ENCODE measurements at regions of chr4 and their contacts with region 1.

Region 1: GRCh38 chr4:155809835-155810234 is 51.0 kb downstream of the GUCY1B1 start:
- DNase-seq: peak in 6 of 9 donors; percentile 24 to 66 (median 44)
- ATAC-seq: peak; percentile 86
- H3K4me3 ChIP-seq: no peak overlapping the region
- H3K4me3 Mint-ChIP-seq: no peak overlapping the region
- H3K27ac ChIP-seq: no peak overlapping the region
- H3K27ac Mint-ChIP-seq: no peak overlapping the region
- H3K4me1 ChIP-seq: no peaks in the 10 kb centered on the region
- H3K4me1 Mint-ChIP-seq: peaks cover 0 to 2% (median 0%) of the 10 kb centered on the region in 7 donors
- H3K27me3 ChIP-seq: no peaks in the 10 kb centered on the region
- H3K27me3 Mint-ChIP-seq: peaks cover 0 to 4% (median 0%) of the 10 kb centered on the region in 5 donors

Region 2: DNA sequence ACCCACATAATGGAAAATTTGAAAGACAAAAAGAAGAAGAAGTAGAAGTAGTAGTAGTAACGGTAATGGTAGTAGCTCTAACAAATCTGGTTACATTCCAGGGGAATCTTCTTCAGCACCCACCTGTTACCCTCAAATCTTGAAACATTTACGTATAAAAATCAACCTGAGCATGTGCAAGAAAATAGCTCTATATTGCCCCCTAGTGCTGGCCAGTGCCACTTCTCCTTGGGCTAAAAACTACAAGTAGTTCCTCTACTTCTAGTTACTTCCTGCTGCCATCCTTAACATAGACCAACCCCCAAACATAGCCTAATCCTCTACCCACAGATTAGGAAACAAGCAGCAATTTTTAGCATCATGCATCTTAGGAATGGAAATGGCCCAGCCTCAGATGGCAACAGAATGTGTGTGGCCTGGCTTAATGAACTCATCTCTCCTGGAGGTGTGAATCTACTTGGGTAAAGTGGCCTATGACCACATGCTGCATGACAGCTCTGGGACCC is 1158.7 kb after region 1 on chr4:
- CTCF ChIA-PET with region 1: no interaction called
- POLR2A ChIA-PET with region 1: no interaction called
- intact Hi-C with region 1: loop called in 1 of 2 experiments (anchors 10 kb)
- DNase-seq: no peak
- ATAC-seq: peak; percentile 77
- H3K4me3 ChIP-seq: no peak overlapping the region
- H3K4me3 Mint-ChIP-seq: no peak overlapping the region
- H3K27ac ChIP-seq: no peak overlapping the region
- H3K27ac Mint-ChIP-seq: no peak overlapping the region
- H3K4me1 ChIP-seq: no peaks in the 10 kb centered on the region
- H3K4me1 Mint-ChIP-seq: peaks cover 0 to 19% (median 13%) of the 10 kb centered on the region in 7 donors
- H3K27me3 ChIP-seq: peaks cover 0 to 9% of the 10 kb centered on the region in 2 donors
- H3K27me3 Mint-ChIP-seq: peaks cover 33 to 66% (median 58%) of the 10 kb centered on the region in 5 donors